ENCODE measurements at regions of chr16 and their contacts with region 1.

Region 1: GRCh38 chr16:67816240-67817031 is 9.7 kb downstream of the TSNAXIP1 start:
- DNase-seq: peak; percentile 94
- H3K4me3 Mint-ChIP-seq: peak overlapping the region; percentile 35
- H3K27ac Mint-ChIP-seq: peak overlapping the region; percentile 28
- H3K4me1 Mint-ChIP-seq: peaks cover 2% of the 10 kb centered on the region
- H3K27me3 Mint-ChIP-seq: no peaks in the 10 kb centered on the region

Region 2: GRCh38 chr16:67672739-67673662 is 143.4 kb before region 1 on chr16:
- CTCF ChIA-PET with region 1: interaction called, 14 read pairs
- POLR2A ChIA-PET with region 1: no interaction called
- intact Hi-C with region 1: no loop called
- DNase-seq: peak; percentile 68
- H3K4me3 Mint-ChIP-seq: no peak overlapping the region
- H3K27ac Mint-ChIP-seq: no peak overlapping the region
- H3K4me1 Mint-ChIP-seq: no peaks in the 10 kb centered on the region
- H3K27me3 Mint-ChIP-seq: no peaks in the 10 kb centered on the region

Region 3: DNA sequence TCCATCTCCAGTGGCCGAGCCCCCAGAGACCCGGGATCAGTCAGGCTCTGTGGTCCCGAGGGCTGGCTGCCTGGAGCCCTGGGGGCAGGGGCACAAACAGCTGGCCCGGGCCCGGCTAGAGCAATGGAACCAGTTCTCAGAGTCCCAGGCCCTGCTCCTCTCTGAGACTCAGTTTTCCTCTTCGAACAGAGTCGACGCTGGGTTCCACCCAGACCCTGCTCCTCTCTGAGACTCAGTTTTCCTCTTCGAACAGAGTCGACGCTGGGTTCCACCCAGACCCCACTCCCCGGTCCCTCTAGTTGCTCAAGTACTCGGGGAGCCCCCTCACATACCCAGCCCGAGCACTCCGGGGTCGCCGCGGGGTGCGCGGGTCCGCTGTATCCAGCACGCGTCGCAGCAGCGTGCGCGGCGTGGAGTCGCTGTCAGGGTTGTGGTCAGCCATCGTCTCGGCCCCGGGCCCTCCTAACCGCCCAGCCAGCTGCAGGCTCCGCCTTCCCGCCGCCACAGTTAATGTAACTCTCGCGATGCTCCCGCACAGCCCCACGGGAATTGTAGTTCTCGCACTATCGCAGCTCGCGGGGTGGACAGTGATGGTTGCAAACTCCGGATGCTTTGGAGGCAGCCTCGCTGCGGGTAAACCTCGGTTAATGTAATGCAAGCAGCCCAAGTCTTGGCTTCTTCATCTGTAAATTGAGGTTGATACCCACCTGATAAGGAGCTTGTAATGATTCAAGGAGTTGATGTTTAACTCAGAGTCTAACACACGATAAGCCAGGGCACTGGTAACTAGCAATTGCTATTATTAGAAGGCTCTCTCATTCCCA is 17.2 kb after region 1 on chr16:
- CTCF ChIA-PET with region 1: interaction called, 38 read pairs
- POLR2A ChIA-PET with region 1: interaction called, 5 read pairs
- intact Hi-C with region 1: no loop called
- DNase-seq: peak; percentile 97
- H3K4me3 Mint-ChIP-seq: peak overlapping the region; percentile 89
- H3K27ac Mint-ChIP-seq: peak overlapping the region; percentile 39
- H3K4me1 Mint-ChIP-seq: peaks cover 8% of the 10 kb centered on the region
- H3K27me3 Mint-ChIP-seq: no peaks in the 10 kb centered on the region

Region 4: GRCh38 chr16:67872786-67873537 is 56.5 kb after region 1 on chr16 and contains the start of gene EDC4:
- CTCF ChIA-PET with region 1: interaction called, 19 read pairs
- POLR2A ChIA-PET with region 1: no interaction called
- intact Hi-C with region 1: loop called (anchors 5 kb)
- DNase-seq: peak; percentile 93
- H3K4me3 Mint-ChIP-seq: peak within 1 kb of the TSS; percentile 95
- H3K27ac Mint-ChIP-seq: peak within 1 kb of the TSS; percentile 88
- H3K4me1 Mint-ChIP-seq: peaks cover 28% of the 10 kb centered on the region
- H3K27me3 Mint-ChIP-seq: no peaks in the 10 kb centered on the region
- total RNA-seq, gene EDC4: 88.6 to 94.2 TPM

Region 5: DNA sequence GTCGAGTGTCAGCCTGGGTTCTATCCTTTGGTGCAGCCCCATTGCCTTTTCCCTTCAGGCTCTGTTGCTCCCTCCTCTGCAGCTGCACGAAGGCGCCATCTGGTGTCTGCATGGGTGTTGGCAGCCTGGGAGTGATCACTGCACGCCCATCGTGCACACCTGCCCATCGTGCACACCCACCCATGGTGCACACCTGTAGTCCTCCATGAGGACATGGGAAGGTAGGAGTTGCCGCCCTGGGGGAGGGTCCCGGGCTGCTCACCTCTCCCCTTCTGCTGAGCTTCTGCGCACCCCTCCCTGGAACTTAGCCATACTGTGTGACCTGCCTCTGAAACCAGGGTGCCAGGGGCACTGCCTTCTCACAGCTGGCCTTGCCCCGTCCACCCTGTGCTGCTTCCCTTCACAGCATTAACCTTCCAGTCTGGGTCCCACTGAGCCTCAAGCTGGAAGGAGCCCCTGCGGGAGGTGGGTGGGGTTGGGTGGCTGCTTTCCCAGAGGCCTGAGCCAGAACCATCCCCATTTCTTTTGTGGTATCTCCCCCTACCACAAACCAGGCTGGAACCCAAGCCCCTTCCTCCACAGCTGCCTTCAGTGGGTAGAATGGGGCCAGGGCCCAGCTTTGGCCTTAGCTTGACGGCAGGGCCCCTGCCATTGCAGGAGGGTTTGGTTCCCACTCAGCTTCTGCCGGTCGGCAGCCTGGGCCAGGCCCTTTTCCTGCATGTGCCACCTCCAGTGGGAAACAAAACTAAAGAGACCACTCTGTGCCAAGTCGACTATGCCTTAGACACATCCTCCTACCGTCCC is 112.3 kb after region 1 on chr16:
- CTCF ChIA-PET with region 1: interaction called, 20 read pairs
- POLR2A ChIA-PET with region 1: no interaction called
- intact Hi-C with region 1: loop called (anchors 1 kb)
- DNase-seq: peak; percentile 87
- H3K4me3 Mint-ChIP-seq: no peak overlapping the region
- H3K27ac Mint-ChIP-seq: no peak overlapping the region
- H3K4me1 Mint-ChIP-seq: peaks cover 4% of the 10 kb centered on the region
- H3K27me3 Mint-ChIP-seq: no peaks in the 10 kb centered on the region

Region 6: DNA sequence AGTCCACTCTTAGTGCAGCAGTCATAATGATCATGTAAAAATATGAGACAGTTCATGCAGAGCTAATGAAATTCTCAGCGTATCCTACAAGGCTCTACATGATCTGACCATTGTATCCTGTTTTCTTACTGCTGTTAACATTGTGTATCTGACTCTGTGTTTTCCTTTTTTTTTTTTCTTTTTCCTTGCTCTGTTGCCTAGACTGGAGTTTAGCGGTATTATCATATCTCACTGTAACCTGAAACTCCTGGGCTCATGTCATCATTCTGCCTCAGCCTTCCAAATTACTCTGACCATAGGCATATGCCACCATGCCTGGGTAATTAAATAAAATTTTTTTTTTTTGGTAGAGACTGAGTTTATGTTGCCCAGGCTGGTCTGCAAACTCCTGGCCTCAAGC is 218.8 kb after region 1 on chr16:
- CTCF ChIA-PET with region 1: interaction called, 27 read pairs
- POLR2A ChIA-PET with region 1: interaction called, 4 read pairs
- intact Hi-C with region 1: loop called (anchors 2 kb)
- DNase-seq: no peak
- H3K4me3 Mint-ChIP-seq: no peak overlapping the region
- H3K27ac Mint-ChIP-seq: no peak overlapping the region
- H3K4me1 Mint-ChIP-seq: peaks cover 6% of the 10 kb centered on the region
- H3K27me3 Mint-ChIP-seq: no peaks in the 10 kb centered on the region

Measured in activated CD4-positive, alpha-beta memory T cell treated with anti-CD3 and anti-CD28 coated beads for 36 hours (primary cell).